Posterior vena cava (tissue), 2 donors: ENCODE measurements at regions of chr6 and their contacts with region 1.

Region 1: GRCh38 chr6:14129575-14129974 is 12.0 kb downstream of the CD83 start:
- DNase-seq: no peak

Region 2: GRCh38 chr6:14596410-14596809 is 466.8 kb after region 1 on chr6:
- intact Hi-C with region 1: loop called in 1 of 2 experiments (anchors 5 kb)
- DNase-seq: no peak

Region 3: DNA sequence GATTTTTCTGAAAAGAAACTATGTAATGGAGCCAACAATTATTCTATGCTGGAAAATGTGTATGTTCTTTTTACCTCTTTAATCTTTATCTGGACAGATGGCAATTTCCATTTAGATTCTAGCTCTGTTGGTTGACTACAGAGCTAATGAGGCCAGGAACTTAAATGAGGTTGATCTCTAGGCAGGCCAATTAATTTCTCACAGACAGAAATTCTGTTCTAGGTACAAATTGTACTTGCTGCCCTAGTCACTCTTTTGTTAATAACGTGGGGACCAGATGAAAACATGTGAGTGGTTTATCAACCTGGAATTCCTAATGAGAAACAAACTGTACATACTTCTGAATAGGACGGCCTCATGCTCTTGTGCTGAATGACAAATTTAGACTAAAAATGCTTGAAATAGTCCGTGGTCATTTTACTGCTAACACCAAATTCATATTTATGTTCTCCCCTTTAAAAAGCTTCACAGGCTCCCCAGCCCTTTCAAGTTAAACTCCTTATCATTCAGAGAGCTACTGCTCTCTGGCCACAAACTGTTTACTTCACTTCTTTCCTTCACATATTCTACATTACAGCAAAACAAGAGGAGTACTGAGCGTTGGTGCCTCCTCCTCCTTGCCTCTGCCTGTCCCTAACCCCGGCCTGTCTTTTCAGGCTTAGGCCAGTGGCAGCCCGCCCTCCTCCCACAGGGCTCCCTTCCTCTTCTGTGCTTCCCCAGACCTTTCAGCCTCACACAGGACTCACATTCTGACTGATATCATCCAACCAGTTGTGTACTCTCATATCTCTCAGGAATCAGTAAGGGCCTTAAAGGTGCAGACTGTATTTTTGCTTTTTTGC is 1491.8 kb after region 1 on chr6:
- intact Hi-C with region 1: loop called in 1 of 2 experiments (anchors 10 kb)
- DNase-seq: no peak